OCI-LY7 (cell line): ENCODE measurements at regions of chr6 and their contacts with region 1.

Region 1: DNA sequence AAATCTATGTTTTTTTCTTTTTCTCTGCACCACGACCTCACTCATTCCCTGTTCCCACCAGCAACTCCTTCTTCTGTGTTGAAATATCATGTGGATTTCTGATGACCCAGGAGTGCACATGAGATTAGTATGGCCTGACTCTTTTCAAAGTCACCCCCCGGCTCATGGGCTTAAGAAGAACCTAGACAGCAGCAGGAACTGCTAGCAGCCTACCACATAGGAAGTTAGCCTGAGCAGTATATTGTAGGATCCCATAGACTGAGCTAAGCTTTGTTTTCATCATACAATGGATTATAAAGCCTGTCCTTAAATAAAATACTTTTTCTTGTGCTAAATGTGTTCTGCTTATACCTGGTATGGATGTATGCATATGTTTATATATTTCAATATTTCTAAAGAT is 6.7 kb downstream of the KLHL32 start:
- DNase-seq: no peak
- H3K4me3 ChIP-seq: no peak overlapping the region
- H3K27ac ChIP-seq: no peak overlapping the region
- H3K4me1 ChIP-seq: peaks cover 2% of the 10 kb centered on the region
- CTCF ChIP-seq: no peak

Region 2: DNA sequence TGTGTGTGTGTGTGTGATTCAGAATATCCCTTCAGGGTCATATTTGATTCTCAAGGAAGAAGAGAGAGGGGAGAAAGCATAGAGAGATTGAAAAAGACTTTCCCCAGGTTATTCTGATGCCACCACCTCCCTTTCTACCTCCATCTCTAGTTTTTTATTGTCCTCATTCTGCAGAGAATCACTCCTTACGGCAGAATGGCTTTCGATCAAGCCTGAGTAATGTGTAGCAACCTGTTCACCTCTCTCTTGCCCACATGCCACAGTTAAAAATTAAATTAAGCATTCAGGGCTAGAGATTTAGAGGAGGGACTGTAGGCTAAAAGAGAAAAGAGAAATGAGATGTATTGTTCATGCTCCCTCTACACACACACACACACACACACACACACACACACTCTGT is 11.5 kb after region 1 on chr6:
- CTCF ChIA-PET with region 1: no interaction called
- POLR2A ChIA-PET with region 1: interaction called, 10 read pairs
- intact Hi-C with region 1: no loop called
- DNase-seq: no peak
- H3K4me3 ChIP-seq: no peak overlapping the region
- H3K27ac ChIP-seq: no peak overlapping the region
- H3K4me1 ChIP-seq: no peaks in the 10 kb centered on the region
- CTCF ChIP-seq: no peak